K562 (cell line): ENCODE measurements at regions of chr1 and their contacts with region 1.

Region 1: GRCh38 chr1:111656086-111657017 is 36.8 kb downstream of the RAP1A start:
- DNase-seq: peak; percentile 36 to 69 (median 48)
- ATAC-seq: peak; percentile 38; the same call in 2 of the 3 replicates
- H3K4me3 ChIP-seq: no peak overlapping the region
- H3K27ac ChIP-seq: no peak overlapping the region
- H3K4me1 ChIP-seq: peaks cover 5 to 28% of the 10 kb centered on the region in 2 experiments; a peak in 4 of 5 replicates
- H3K27me3 ChIP-seq: no peaks in the 10 kb centered on the region
- CTCF ChIP-seq: peak; percentile 57 to 87 (median 74); a peak in 5 of 6 replicates
- EP300 ChIP-seq: no peak
- POLR2A ChIP-seq: no peak
- RAD21 ChIP-seq: peak; percentile 92 to 96

Region 2: DNA sequence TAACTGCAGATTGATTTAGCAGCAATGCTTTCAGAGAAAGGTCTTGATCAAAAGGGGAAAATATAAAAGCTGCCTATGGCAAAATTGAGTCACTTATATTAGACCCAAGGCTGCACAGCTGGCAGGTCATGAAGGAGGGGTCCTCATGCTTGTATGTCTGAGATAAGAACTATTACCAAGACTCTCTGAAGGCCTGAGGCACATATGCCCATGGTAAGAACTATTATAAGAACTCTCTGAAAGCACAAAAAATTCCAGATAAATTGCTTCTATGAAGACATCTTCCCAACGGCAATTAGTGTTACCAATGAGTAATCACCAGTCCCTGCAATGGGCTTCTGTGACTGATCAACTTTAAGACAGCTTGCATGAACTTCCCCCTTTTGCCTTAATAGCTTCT is 649.8 kb before region 1 on chr1:
- CTCF ChIA-PET with region 1: no interaction called
- POLR2A ChIA-PET with region 1: no interaction called
- in situ Hi-C with region 1: no loop called
- intact Hi-C with region 1: no loop called
- DNase-seq: no peak
- ATAC-seq: no peak
- H3K4me3 ChIP-seq: no peak overlapping the region
- H3K27ac ChIP-seq: no peak overlapping the region
- H3K4me1 ChIP-seq: no peaks in the 10 kb centered on the region
- H3K27me3 ChIP-seq: 0 out of 5 replicates have a peak, but pooled peaks cover 0 to 6% of the 10 kb centered on the region in 2 experiments
- CTCF ChIP-seq: no peak
- EP300 ChIP-seq: no peak
- POLR2A ChIP-seq: no peak
- RAD21 ChIP-seq: no peak

Region 3: GRCh38 chr1:111563619-111564018 is 92.7 kb before region 1 on chr1:
- CTCF ChIA-PET with region 1: no interaction called
- POLR2A ChIA-PET with region 1: no interaction called
- in situ Hi-C with region 1: no loop called
- intact Hi-C with region 1: loop called (anchors 5 kb)
- DNase-seq: peak in 1 of 4 experiments; percentile 21
- ATAC-seq: no peak
- H3K4me3 ChIP-seq: no peak overlapping the region
- H3K27ac ChIP-seq: no peak overlapping the region
- H3K4me1 ChIP-seq: peaks cover 0 to 5% of the 10 kb centered on the region in 2 experiments; a peak in 1 of 5 replicates
- H3K27me3 ChIP-seq: no peaks in the 10 kb centered on the region
- CTCF ChIP-seq: no peak
- EP300 ChIP-seq: no peak
- POLR2A ChIP-seq: no peak
- RAD21 ChIP-seq: no peak

Region 4: GRCh38 chr1:111592389-111593361 is 63.7 kb before region 1 on chr1:
- CTCF ChIA-PET with region 1: no interaction called
- POLR2A ChIA-PET with region 1: no interaction called
- in situ Hi-C with region 1: no loop called
- intact Hi-C with region 1: loop called (anchors 5 kb)
- DNase-seq: peak; percentile 80 to 89 (median 82)
- ATAC-seq: peak; percentile 93
- H3K4me3 ChIP-seq: peak overlapping the region; percentile 3; the same call in 1 of the 2 replicates
- H3K27ac ChIP-seq: peak overlapping the region; percentile 69
- H3K4me1 ChIP-seq: peaks cover 14 to 41% of the 10 kb centered on the region in 2 experiments
- H3K27me3 ChIP-seq: no peaks in the 10 kb centered on the region
- CTCF ChIP-seq: no peak
- EP300 ChIP-seq: peak; percentile 55; the same call in 1 of the 2 replicates
- POLR2A ChIP-seq: peak; percentile 44; the same call in 1 of the 2 replicates
- RAD21 ChIP-seq: 0 out of 4 replicates have a peak, but pooled peaks of 1 of the 2 experiments have one; percentile 4

Region 5: GRCh38 chr1:111628153-111628552 is 28.2 kb before region 1 on chr1:
- CTCF ChIA-PET with region 1: no interaction called
- POLR2A ChIA-PET with region 1: no interaction called
- in situ Hi-C with region 1: no loop called
- intact Hi-C with region 1: no loop called
- DNase-seq: no peak
- ATAC-seq: no peak
- H3K4me3 ChIP-seq: no peak overlapping the region
- H3K27ac ChIP-seq: no peak overlapping the region; the same call in 2 of the 3 replicates
- H3K4me1 ChIP-seq: peaks cover 3 to 24% of the 10 kb centered on the region in 2 experiments; a peak in 3 of 5 replicates
- H3K27me3 ChIP-seq: no peaks in the 10 kb centered on the region
- CTCF ChIP-seq: no peak
- EP300 ChIP-seq: no peak
- POLR2A ChIP-seq: no peak
- RAD21 ChIP-seq: no peak

Region 6: DNA sequence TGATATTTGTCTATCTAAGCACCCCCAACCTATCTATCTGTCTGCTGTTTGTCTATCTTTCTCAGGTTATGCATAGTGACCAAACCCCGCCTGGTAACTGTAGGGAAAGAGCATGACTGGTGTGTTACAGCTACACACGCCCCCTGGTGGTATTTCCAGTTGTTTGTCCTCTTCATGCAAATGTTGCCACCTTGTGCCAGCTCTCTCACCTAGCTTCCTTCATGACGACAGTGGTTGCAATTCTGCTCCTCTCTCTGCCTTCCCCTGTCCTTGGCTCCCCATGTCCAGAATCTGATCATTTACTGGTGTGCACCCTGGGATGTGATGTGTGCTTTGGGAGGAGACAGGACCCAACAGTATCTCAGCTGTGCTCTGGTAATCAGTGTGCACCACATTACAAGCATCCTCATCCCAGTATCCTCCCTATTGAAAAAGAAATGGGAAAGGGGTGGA is 91.0 kb after region 1 on chr1:
- CTCF ChIA-PET with region 1: no interaction called
- POLR2A ChIA-PET with region 1: no interaction called
- in situ Hi-C with region 1: no loop called
- intact Hi-C with region 1: loop called (anchors 5 kb)
- DNase-seq: peak; percentile 75 to 89 (median 79)
- ATAC-seq: peak; percentile 89
- H3K4me3 ChIP-seq: no peak overlapping the region
- H3K27ac ChIP-seq: no peak overlapping the region
- H3K4me1 ChIP-seq: peaks cover 0 to 13% of the 10 kb centered on the region in 2 experiments; a peak in 2 of 5 replicates
- H3K27me3 ChIP-seq: peaks cover 10 to 25% of the 10 kb centered on the region in 2 experiments
- CTCF ChIP-seq: peak; percentile 98 to 99 (median 98)
- EP300 ChIP-seq: 0 out of 2 replicates have a peak, but pooled peaks have one; percentile 47
- POLR2A ChIP-seq: no peak
- RAD21 ChIP-seq: peak; percentile 77 to 96